Naive thymus-derived CD4-positive, alpha-beta T cell (primary cell): ENCODE measurements at regions of chr13 and their contacts with region 1.

Region 1: GRCh38 chr13:91348906-91349435 is 1.5 kb downstream of the MIR17HG start:
- DNase-seq: peak; percentile 79 to 96 (median 90)
- ATAC-seq: peak; percentile 83
- H3K4me3 ChIP-seq: peak overlapping the region; percentile 70
- H3K4me3 Mint-ChIP-seq: peak overlapping the region; percentile 88 to 98 (median 91)
- H3K27ac ChIP-seq: peak overlapping the region; percentile 83
- H3K27ac Mint-ChIP-seq: peak overlapping the region; percentile 85 to 95 (median 93)
- H3K4me1 ChIP-seq: peaks cover 15 to 17% of the 10 kb centered on the region in 2 donors
- H3K4me1 Mint-ChIP-seq: peaks cover 6 to 46% (median 41%) of the 10 kb centered on the region in 7 donors
- H3K27me3 ChIP-seq: no peaks in the 10 kb centered on the region
- H3K27me3 Mint-ChIP-seq: no peaks in the 10 kb centered on the region

Region 2: GRCh38 chr13:91133941-91134802 is 214.8 kb before region 1 on chr13:
- CTCF ChIA-PET with region 1: no interaction called
- POLR2A ChIA-PET with region 1: no interaction called
- intact Hi-C with region 1: loop called (anchors 1 kb)
- DNase-seq: peak in 5 of 9 donors; percentile 10 to 21 (median 20)
- ATAC-seq: peak; percentile 57
- H3K4me3 ChIP-seq: no peak overlapping the region
- H3K4me3 Mint-ChIP-seq: no peak overlapping the region
- H3K27ac ChIP-seq: no peak overlapping the region
- H3K27ac Mint-ChIP-seq: no peak overlapping the region
- H3K4me1 ChIP-seq: no peaks in the 10 kb centered on the region
- H3K4me1 Mint-ChIP-seq: peaks cover 0 to 4% (median 0%) of the 10 kb centered on the region in 7 donors
- H3K27me3 ChIP-seq: no peaks in the 10 kb centered on the region
- H3K27me3 Mint-ChIP-seq: peaks cover 0 to 5% (median 0%) of the 10 kb centered on the region in 5 donors

Region 3: DNA sequence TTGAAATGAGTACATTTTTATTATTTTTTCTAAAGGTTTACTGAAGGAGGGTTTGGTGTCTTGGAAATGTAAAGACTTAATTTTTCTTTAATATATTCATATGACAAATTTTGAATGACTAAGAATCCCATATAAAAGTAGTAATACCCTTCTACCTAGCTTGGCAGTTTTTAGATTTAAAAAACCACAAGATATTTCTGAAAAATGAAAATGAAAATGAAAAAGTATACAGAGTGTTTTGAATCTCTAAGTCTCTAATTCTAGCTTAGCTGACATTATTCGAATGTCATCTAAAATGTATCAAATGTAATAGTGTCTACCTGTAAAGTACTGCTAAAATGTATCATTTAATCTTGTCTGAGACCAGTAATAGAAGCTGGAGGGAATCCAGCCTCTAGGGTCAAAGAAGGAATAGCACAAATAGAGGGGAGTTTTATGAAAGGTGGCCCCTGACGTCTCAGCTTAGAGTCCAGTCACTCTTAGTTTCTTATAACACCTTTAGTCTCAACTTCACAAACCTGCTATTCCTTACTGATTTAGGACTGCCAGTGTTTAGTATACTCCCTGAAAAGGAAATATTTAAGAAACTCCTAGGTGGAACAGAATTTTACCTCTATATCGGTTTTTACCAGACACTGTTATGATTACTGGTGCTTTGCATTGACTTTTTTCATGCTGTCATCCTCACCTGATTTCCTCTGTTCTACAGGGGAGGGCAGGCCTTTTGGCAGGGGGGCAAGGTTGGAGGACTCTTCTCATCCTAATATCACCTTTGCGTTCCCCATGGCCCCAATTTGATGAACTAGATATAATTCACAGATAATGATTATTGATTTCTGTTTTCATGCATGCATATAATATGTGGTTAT is 17.7 kb before region 1 on chr13:
- CTCF ChIA-PET with region 1: no interaction called
- POLR2A ChIA-PET with region 1: no interaction called
- intact Hi-C with region 1: loop called in 1 of 2 experiments (anchors 1 kb)
- DNase-seq: no peak
- ATAC-seq: no peak
- H3K4me3 ChIP-seq: no peak overlapping the region
- H3K4me3 Mint-ChIP-seq: peak overlapping the region in 1 of 10 donors; percentile 64
- H3K27ac ChIP-seq: no peak overlapping the region
- H3K27ac Mint-ChIP-seq: peak overlapping the region in 1 of 9 donors; percentile 62
- H3K4me1 ChIP-seq: no peaks in the 10 kb centered on the region
- H3K4me1 Mint-ChIP-seq: peaks cover 0 to 19% (median 0%) of the 10 kb centered on the region in 7 donors
- H3K27me3 ChIP-seq: no peaks in the 10 kb centered on the region
- H3K27me3 Mint-ChIP-seq: peaks cover 0 to 7% (median 0%) of the 10 kb centered on the region in 5 donors

Region 4: GRCh38 chr13:91369441-91369831 is 20.5 kb after region 1 on chr13:
- CTCF ChIA-PET with region 1: no interaction called
- POLR2A ChIA-PET with region 1: no interaction called
- intact Hi-C with region 1: loop called in 1 of 2 experiments (anchors 2 kb)
- DNase-seq: no peak
- ATAC-seq: no peak
- H3K4me3 ChIP-seq: no peak overlapping the region
- H3K4me3 Mint-ChIP-seq: no peak overlapping the region
- H3K27ac ChIP-seq: no peak overlapping the region
- H3K27ac Mint-ChIP-seq: no peak overlapping the region
- H3K4me1 ChIP-seq: no peaks in the 10 kb centered on the region
- H3K4me1 Mint-ChIP-seq: peaks cover 0 to 7% (median 0%) of the 10 kb centered on the region in 7 donors
- H3K27me3 ChIP-seq: no peaks in the 10 kb centered on the region
- H3K27me3 Mint-ChIP-seq: peaks cover 3 to 9% (median 7%) of the 10 kb centered on the region in 5 donors

Region 5: GRCh38 chr13:91398413-91399272 is 49.7 kb after region 1 on chr13 and contains the start of gene GPC5:
- CTCF ChIA-PET with region 1: no interaction called
- POLR2A ChIA-PET with region 1: no interaction called
- intact Hi-C with region 1: loop called (anchors 1 kb)
- DNase-seq: peak; percentile 57 to 88 (median 77)
- ATAC-seq: peak; percentile 100
- H3K4me3 ChIP-seq: peak within 1 kb of the TSS; percentile 39
- H3K4me3 Mint-ChIP-seq: peak within 1 kb of the TSS; percentile 70 to 89 (median 81)
- H3K27ac ChIP-seq: no peak within 1 kb of the TSS
- H3K27ac Mint-ChIP-seq: peak within 1 kb of the TSS in 2 of 9 donors; percentile 18 to 25
- H3K4me1 ChIP-seq: peaks cover 5 to 11% of the 10 kb centered on the region in 2 donors
- H3K4me1 Mint-ChIP-seq: peaks cover 4 to 15% (median 12%) of the 10 kb centered on the region in 7 donors
- H3K27me3 ChIP-seq: peaks cover 0 to 4% of the 10 kb centered on the region in 2 donors
- H3K27me3 Mint-ChIP-seq: peaks cover 23 to 89% (median 45%) of the 10 kb centered on the region in 5 donors
- total RNA-seq, gene GPC5: 0.10 to 0.38 TPM in 2 of 5 experiments, not detected in the others

Region 6: GRCh38 chr13:91544723-91545122 is 195.8 kb after region 1 on chr13:
- CTCF ChIA-PET with region 1: no interaction called
- POLR2A ChIA-PET with region 1: no interaction called
- intact Hi-C with region 1: no loop called
- DNase-seq: no peak
- ATAC-seq: no peak
- H3K4me3 ChIP-seq: no peak overlapping the region
- H3K4me3 Mint-ChIP-seq: no peak overlapping the region
- H3K27ac ChIP-seq: no peak overlapping the region
- H3K27ac Mint-ChIP-seq: no peak overlapping the region
- H3K4me1 ChIP-seq: no peaks in the 10 kb centered on the region
- H3K4me1 Mint-ChIP-seq: no peaks in the 10 kb centered on the region
- H3K27me3 ChIP-seq: no peaks in the 10 kb centered on the region
- H3K27me3 Mint-ChIP-seq: peaks cover 0 to 7% (median 0%) of the 10 kb centered on the region in 5 donors

Region 7: GRCh38 chr13:91699863-91700262 is 350.9 kb after region 1 on chr13:
- CTCF ChIA-PET with region 1: no interaction called
- POLR2A ChIA-PET with region 1: no interaction called
- intact Hi-C with region 1: no loop called
- DNase-seq: no peak
- ATAC-seq: no peak
- H3K4me3 ChIP-seq: no peak overlapping the region
- H3K4me3 Mint-ChIP-seq: no peak overlapping the region
- H3K27ac ChIP-seq: no peak overlapping the region
- H3K27ac Mint-ChIP-seq: no peak overlapping the region
- H3K4me1 ChIP-seq: no peaks in the 10 kb centered on the region
- H3K4me1 Mint-ChIP-seq: no peaks in the 10 kb centered on the region
- H3K27me3 ChIP-seq: no peaks in the 10 kb centered on the region
- H3K27me3 Mint-ChIP-seq: peaks cover 0 to 7% (median 0%) of the 10 kb centered on the region in 5 donors

Region 8: GRCh38 chr13:91845612-91846011 is 496.6 kb after region 1 on chr13:
- CTCF ChIA-PET with region 1: no interaction called
- POLR2A ChIA-PET with region 1: no interaction called
- intact Hi-C with region 1: no loop called
- DNase-seq: no peak
- ATAC-seq: no peak
- H3K4me3 ChIP-seq: no peak overlapping the region
- H3K4me3 Mint-ChIP-seq: no peak overlapping the region
- H3K27ac ChIP-seq: no peak overlapping the region
- H3K27ac Mint-ChIP-seq: no peak overlapping the region
- H3K4me1 ChIP-seq: no peaks in the 10 kb centered on the region
- H3K4me1 Mint-ChIP-seq: no peaks in the 10 kb centered on the region
- H3K27me3 ChIP-seq: no peaks in the 10 kb centered on the region
- H3K27me3 Mint-ChIP-seq: no peaks in the 10 kb centered on the region